ENCODE measurements at regions of chr15 and their contacts with region 1.

Region 1: DNA sequence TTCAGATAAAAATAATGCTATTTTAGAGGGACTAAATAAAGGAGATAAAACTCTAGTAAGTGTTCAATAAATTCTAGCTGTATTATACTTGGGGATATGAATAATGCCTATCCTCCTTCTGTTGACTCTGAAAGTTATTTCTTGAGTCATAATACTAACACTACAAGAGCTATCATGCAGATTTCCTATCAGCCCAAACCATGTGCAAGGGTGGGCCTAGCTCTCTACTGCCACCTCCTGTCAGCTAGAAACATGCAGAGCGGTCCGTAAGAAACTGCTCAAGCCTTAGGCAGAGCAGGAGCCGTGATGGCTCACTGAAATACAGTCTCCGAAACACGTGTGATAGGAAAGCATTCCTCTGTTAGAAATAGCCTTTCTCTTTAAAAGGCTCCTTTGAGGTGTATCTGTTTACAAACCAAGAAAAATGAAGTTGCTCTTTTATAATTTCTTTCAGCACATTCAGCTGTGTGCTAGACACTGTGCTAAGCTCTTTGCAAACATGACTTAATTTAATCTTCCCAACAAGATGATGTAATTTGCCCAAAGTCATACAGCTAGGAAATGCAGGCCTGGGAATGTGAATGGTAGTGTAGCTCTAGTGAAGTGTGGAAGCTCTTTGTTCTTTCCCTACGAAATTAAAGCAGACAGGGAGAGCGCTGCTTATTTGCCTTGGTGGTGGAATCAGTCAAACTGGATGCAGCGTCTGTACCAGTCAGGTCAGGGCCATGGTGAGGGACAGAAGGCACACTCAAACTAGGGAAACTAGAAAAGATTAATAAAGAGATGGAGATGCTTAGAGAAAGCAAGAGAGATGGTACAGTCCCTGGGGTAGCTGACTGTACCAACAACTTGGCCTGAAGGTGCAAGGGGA is 43.1 kb downstream of the MTHFS start:
- DNase-seq: peak; percentile 82
- H3K4me3 Mint-ChIP-seq: no peak overlapping the region
- H3K27ac Mint-ChIP-seq: no peak overlapping the region
- H3K4me1 Mint-ChIP-seq: peaks cover 8% of the 10 kb centered on the region
- H3K27me3 Mint-ChIP-seq: no peaks in the 10 kb centered on the region
- CTCF ChIP-seq: peak; percentile 85

Region 2: GRCh38 chr15:79380755-79381497 is 472.8 kb before region 1 on chr15:
- CTCF ChIA-PET with region 1: interaction called, 238 read pairs
- POLR2A ChIA-PET with region 1: interaction called, 5 read pairs
- intact Hi-C with region 1: loop called (anchors 1 kb)
- DNase-seq: peak; percentile 78
- H3K4me3 Mint-ChIP-seq: no peak overlapping the region
- H3K27ac Mint-ChIP-seq: no peak overlapping the region
- H3K4me1 Mint-ChIP-seq: no peaks in the 10 kb centered on the region
- H3K27me3 Mint-ChIP-seq: no peaks in the 10 kb centered on the region
- CTCF ChIP-seq: peak; percentile 75

Region 3: GRCh38 chr15:79492065-79492464 is 361.6 kb before region 1 on chr15:
- CTCF ChIA-PET with region 1: no interaction called
- POLR2A ChIA-PET with region 1: no interaction called
- intact Hi-C with region 1: no loop called
- DNase-seq: no peak
- H3K4me3 Mint-ChIP-seq: no peak overlapping the region
- H3K27ac Mint-ChIP-seq: no peak overlapping the region
- H3K4me1 Mint-ChIP-seq: no peaks in the 10 kb centered on the region
- H3K27me3 Mint-ChIP-seq: peaks cover 13% of the 10 kb centered on the region
- CTCF ChIP-seq: no peak

Region 4: GRCh38 chr15:79572691-79573404 is 280.8 kb before region 1 on chr15:
- CTCF ChIA-PET with region 1: no interaction called
- POLR2A ChIA-PET with region 1: no interaction called
- intact Hi-C with region 1: no loop called
- DNase-seq: no peak
- H3K4me3 Mint-ChIP-seq: no peak overlapping the region
- H3K27ac Mint-ChIP-seq: no peak overlapping the region
- H3K4me1 Mint-ChIP-seq: no peaks in the 10 kb centered on the region
- H3K27me3 Mint-ChIP-seq: peaks cover 14% of the 10 kb centered on the region
- CTCF ChIP-seq: no peak

Region 5: DNA sequence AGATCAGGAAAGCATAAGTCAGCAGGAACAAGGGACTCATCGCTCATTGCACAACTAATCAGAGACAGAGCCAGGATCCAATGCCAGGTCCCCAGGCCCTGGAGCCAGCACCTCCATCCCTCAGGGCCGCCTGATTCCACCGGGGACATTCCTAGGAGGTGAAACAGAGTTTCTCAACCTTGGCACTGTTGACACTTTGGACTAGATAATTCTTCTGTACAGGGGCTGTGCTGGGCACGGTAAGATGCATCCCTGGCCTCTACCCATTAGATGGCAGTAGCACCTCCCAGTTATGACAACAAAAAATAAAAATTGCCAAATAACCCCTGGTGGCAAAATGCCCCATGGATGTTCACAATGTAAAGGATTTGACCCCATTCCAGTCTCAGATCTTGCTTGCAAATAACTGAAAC is 84.6 kb before region 1 on chr15:
- CTCF ChIA-PET with region 1: interaction called, 89 read pairs
- POLR2A ChIA-PET with region 1: interaction called, 6 read pairs
- intact Hi-C with region 1: loop called (anchors 1 kb)
- DNase-seq: peak; percentile 85
- H3K4me3 Mint-ChIP-seq: no peak overlapping the region
- H3K27ac Mint-ChIP-seq: no peak overlapping the region
- H3K4me1 Mint-ChIP-seq: peaks cover 12% of the 10 kb centered on the region
- H3K27me3 Mint-ChIP-seq: peaks cover 32% of the 10 kb centered on the region
- CTCF ChIP-seq: peak; percentile 60

Region 6: DNA sequence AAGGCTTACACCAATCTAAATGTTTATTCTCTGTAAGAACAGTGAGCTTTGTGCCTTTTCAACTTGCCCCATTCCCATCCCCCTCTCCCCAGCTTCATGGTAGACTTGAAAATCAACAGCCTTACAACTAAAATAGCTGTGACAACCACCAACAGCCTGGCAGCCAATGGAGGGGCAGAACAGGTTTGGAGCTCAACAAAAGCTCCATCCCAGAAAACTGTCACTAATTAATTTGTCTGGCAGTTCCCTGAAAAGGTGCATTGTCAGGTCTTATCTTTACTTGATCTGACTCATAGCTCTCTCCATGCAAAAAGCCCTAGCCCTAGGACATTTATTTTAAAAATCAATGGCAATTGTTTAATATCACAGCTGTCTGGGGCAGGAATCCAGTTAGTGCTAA is 20.6 kb after region 1 on chr15:
- CTCF ChIA-PET with region 1: interaction called, 14 read pairs
- POLR2A ChIA-PET with region 1: interaction called, 3 read pairs
- intact Hi-C with region 1: no loop called
- DNase-seq: no peak
- H3K4me3 Mint-ChIP-seq: no peak overlapping the region
- H3K27ac Mint-ChIP-seq: no peak overlapping the region
- H3K4me1 Mint-ChIP-seq: no peaks in the 10 kb centered on the region
- H3K27me3 Mint-ChIP-seq: no peaks in the 10 kb centered on the region
- CTCF ChIP-seq: no peak

Region 7: DNA sequence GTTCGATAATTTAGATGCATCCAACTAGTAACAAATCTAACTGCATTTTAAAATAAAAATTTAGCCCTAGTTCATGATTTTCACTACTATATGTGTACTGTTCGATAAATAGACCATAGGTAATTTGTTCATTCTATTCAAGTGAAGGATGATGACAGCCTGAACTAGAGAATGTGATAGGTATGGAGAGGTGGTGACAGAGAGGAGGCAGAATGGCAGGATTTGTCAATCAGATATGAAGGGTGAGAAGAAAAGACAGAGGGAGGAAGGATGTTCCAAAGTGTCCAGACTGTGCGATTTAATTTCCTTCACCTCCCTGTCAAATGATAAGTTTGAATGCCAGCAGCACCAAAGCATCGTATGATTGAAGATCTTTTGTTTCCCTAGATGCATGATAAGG is 85.7 kb after region 1 on chr15:
- CTCF ChIA-PET with region 1: no interaction called
- POLR2A ChIA-PET with region 1: no interaction called
- intact Hi-C with region 1: no loop called
- DNase-seq: no peak
- H3K4me3 Mint-ChIP-seq: no peak overlapping the region
- H3K27ac Mint-ChIP-seq: no peak overlapping the region
- H3K4me1 Mint-ChIP-seq: no peaks in the 10 kb centered on the region
- H3K27me3 Mint-ChIP-seq: no peaks in the 10 kb centered on the region
- CTCF ChIP-seq: no peak

Region 8: GRCh38 chr15:79989682-79990081 is 136.0 kb after region 1 on chr15:
- CTCF ChIA-PET with region 1: interaction called, 24 read pairs
- POLR2A ChIA-PET with region 1: interaction called, 5 read pairs
- intact Hi-C with region 1: loop called (anchors 1 kb)
- DNase-seq: peak; percentile 61
- H3K4me3 Mint-ChIP-seq: no peak overlapping the region
- H3K27ac Mint-ChIP-seq: no peak overlapping the region
- H3K4me1 Mint-ChIP-seq: peaks cover 4% of the 10 kb centered on the region
- H3K27me3 Mint-ChIP-seq: peaks cover 16% of the 10 kb centered on the region
- CTCF ChIP-seq: no peak

Region 9: DNA sequence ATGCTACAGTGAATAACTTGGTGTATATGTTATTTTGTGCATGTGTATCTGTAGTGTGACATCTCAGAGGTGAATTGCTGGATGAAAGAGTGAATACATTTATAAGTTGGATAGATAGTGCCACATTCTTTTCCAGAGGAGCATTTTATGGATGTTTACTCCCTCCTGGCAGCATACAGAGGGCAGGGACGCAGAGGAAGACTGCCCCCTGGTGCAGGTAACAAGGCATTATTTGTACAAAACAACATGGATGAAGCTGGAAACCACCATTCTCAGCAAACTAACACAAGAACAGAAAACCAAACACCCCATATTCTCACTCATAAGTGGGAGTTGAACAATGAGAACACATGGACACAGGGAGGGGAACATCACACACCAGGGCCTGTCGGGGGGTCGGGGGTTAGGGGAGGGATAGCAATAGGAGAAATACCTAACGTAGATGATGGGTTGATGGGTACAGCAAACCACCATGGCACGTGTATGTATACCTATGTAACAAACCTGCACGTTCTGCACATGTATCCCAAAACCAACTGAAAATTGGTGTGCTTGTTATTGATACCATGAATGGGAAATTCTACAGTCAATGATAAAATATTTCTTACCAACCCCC is 456.2 kb after region 1 on chr15:
- CTCF ChIA-PET with region 1: interaction called, 3 read pairs
- POLR2A ChIA-PET with region 1: no interaction called
- intact Hi-C with region 1: loop called (anchors 10 kb)
- DNase-seq: peak; percentile 43
- H3K4me3 Mint-ChIP-seq: no peak overlapping the region
- H3K27ac Mint-ChIP-seq: no peak overlapping the region
- H3K4me1 Mint-ChIP-seq: no peaks in the 10 kb centered on the region
- H3K27me3 Mint-ChIP-seq: peaks cover 17% of the 10 kb centered on the region
- CTCF ChIP-seq: peak; percentile 65